Ovary (tissue), 10 donors: ENCODE measurements at regions of chr12 and their contacts with region 1.

Region 1: DNA sequence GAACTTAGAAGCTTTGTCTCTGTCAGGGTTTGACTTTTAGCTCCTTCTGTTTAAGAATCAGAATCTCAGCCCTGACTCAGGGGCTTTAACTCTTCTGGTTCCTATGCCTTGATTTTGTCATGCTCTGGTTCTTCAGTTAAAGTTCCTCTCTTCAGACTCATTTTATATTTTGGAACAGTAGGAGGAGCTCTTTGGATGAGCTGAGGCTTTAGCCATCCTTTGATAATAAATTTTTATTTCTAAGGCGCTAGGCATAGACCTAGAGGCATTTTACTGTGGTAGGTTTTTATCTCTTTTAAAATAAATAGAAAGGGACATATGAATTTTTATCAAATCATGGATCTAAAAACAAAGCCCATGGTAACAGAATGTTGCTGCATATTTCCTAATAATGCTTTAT is 51.7 kb downstream of the ATP23 start:
- DNase-seq: no peak
- H3K4me3 ChIP-seq: no peak overlapping the region
- H3K27ac ChIP-seq: no peak overlapping the region
- H3K4me1 ChIP-seq: no peaks in the 10 kb centered on the region
- H3K27me3 ChIP-seq: no peaks in the 10 kb centered on the region
- CTCF ChIP-seq: no peak
- EP300 ChIP-seq: no peak
- POLR2A ChIP-seq: no peak

Region 2: DNA sequence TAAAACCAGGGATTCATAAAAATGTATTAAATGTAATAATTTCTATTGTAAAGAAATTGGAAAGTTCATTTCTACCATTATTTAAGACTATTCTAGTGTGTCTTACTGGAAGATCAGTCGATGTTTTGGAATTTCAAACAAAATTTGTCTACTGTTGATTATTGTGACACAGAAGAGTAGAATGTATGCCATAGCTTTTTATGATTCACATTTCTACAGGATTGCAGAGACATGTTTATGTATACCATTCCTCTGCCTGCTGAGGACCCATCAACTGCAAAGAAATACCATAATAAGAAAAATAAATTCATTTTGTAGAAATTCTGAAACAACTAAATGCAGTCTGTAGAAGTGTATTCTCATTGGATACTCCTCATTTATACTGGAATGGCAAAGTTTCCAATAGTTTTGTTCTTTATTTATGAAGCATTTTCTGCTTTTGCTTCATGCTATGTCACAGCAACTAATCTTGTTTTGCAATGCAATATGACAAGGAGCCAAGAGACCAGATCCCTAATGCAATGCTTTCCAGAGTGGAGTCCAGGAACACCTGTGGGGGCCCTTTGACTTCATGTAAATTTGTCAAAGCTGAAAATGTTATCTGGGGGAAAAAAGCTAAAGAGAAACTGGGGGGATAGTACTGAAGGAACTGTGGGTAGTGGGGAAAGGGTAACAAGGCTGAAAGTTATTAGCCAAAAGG is 1100.2 kb after region 1 on chr12:
- intact Hi-C with region 1: loop called in 1 of 4 experiments (anchors 10 kb)
- DNase-seq: no peak
- H3K4me3 ChIP-seq: no peak overlapping the region
- H3K27ac ChIP-seq: no peak overlapping the region
- H3K4me1 ChIP-seq: no peaks in the 10 kb centered on the region
- H3K27me3 ChIP-seq: no peaks in the 10 kb centered on the region
- CTCF ChIP-seq: no peak
- EP300 ChIP-seq: no peak
- POLR2A ChIP-seq: no peak